ENCODE measurements at regions of chr22 and their contacts with region 1.

Region 1: GRCh38 chr22:46061431-46062231 is 84.7 kb upstream of the WNT7B start:
- DNase-seq: no peak
- H3K4me3 ChIP-seq: peak overlapping the region in 2 of 3 experiments; percentile 15 to 57
- H3K27ac ChIP-seq: peak overlapping the region; percentile 53
- H3K4me1 ChIP-seq: peaks cover 37% of the 10 kb centered on the region
- H3K27me3 ChIP-seq: no peaks in the 10 kb centered on the region
- CTCF ChIP-seq: no peak
- POLR2A ChIP-seq: no peak

Region 2: DNA sequence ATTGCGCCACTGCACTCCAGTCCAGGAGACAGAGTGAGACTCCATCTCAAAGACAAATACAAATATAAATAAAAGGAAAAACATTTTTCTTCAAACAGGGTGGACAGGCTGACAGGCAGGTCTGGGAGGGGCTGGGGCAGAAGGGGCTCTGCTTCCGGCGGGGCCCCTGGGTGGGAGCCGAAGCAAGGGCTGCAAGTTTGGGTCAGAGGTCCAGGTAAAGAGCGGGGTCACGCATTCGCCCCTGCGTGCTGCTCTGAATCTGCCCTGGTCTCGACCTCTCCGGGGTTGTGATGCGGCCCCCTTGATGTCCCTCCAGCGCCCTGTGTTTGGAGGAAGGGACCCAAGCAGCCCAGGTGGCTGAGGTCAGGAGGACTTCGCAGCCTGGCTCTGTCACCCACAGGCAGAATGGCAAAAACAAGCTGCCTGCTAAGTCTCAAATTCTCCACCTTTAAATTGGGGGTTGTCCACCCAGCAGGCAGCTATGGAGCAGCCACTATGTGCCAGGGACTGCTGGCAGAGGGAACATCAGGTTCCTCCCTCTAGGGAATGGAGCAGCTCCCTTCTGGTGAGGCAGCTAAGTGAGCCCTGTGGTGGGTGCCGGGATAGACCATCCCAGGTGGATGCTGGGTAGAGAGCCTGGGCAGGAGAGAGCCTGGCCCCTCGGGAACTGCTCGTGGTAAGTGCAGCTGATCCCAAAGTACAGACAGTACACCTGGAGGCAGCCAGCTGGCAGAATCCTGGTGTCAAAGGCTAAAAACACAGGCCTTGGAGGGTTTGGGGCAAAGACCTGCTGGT is 1041.6 kb before region 1 on chr22:
- CTCF ChIA-PET with region 1: no interaction called
- POLR2A ChIA-PET with region 1: no interaction called
- dilution Hi-C with region 1: no loop called
- intact Hi-C with region 1: no loop called
- DNase-seq: no peak
- H3K4me3 ChIP-seq: no peak overlapping the region
- H3K27ac ChIP-seq: no peak overlapping the region
- H3K4me1 ChIP-seq: no peaks in the 10 kb centered on the region
- H3K27me3 ChIP-seq: no peaks in the 10 kb centered on the region
- CTCF ChIP-seq: no peak
- POLR2A ChIP-seq: no peak

Region 3: GRCh38 chr22:46044621-46045438 is 16.8 kb before region 1 on chr22:
- CTCF ChIA-PET with region 1: no interaction called
- POLR2A ChIA-PET with region 1: no interaction called
- dilution Hi-C with region 1: no loop called
- intact Hi-C with region 1: loop called (anchors 2 kb)
- DNase-seq: peak; percentile 37
- H3K4me3 ChIP-seq: peak overlapping the region; percentile 42 to 47 (median 47)
- H3K27ac ChIP-seq: peak overlapping the region; percentile 53
- H3K4me1 ChIP-seq: peaks cover 22% of the 10 kb centered on the region
- H3K27me3 ChIP-seq: no peaks in the 10 kb centered on the region
- CTCF ChIP-seq: no peak
- POLR2A ChIP-seq: peak; percentile 54

Region 4: DNA sequence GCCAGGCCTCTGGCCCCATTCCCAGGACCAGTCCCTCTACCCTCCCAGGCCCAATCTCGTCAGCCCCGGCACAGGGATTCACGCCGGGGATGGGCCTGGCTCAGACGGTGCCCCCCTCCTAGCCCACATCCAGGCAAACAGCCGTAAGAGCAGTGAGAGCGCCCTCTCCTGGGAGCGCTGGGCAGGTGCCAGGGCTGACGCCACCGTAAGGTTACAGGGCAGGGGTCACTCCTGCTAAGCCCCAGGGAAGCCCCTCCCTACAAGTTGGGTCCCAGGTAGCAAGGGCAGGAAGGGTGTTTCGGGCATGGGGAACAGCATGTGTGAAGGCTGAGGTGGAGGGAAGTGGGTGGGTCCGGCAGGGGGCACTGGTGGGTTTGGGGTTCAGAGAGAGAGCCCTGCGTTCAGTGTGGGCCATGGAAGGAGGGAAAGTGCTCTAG is 69.5 kb after region 1 on chr22:
- CTCF ChIA-PET with region 1: no interaction called
- POLR2A ChIA-PET with region 1: no interaction called
- dilution Hi-C with region 1: no loop called
- intact Hi-C with region 1: no loop called
- DNase-seq: no peak
- H3K4me3 ChIP-seq: no peak overlapping the region
- H3K27ac ChIP-seq: no peak overlapping the region
- H3K4me1 ChIP-seq: no peaks in the 10 kb centered on the region
- H3K27me3 ChIP-seq: no peaks in the 10 kb centered on the region
- CTCF ChIP-seq: peak; percentile 46 to 59
- POLR2A ChIP-seq: no peak

Region 5: DNA sequence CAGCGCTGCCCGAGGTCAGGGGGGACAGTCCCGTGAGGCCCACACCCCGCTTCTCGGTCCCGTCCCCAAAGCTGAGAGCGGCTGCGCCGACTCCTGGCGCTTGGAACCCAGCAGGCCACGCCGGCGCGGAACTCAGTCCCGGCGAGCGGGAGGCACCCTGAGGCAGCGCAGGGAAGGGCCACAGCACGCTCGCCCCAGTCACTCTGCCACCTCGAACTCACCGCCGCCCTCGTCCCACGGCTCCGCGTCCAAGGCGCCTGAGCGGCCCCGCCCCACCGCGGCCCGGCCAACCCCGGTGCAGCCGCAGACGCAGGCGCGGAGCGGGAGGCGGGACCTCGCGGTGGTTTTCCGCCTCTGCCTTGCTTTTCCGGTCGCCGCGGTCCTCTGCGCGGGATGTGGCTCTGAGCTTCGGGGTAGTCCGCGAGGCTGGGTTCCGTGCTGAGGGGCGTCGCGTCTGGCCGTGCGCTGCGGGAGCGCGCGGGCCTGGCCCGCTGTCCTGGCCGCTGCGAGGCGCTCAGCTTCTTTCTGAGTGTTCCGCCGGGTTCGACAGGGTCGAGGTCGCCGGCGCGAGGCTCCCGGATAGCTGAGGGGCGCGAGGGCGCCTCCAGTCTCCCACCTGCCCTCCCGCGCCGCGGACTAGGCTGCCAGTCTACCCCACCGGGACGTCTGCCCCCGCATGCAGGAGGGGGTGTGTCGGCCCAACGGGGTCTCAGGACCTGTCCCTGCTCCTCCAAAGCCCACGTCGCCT is 188.6 kb after region 1 on chr22 and contains the start of gene CDPF1:
- CTCF ChIA-PET with region 1: no interaction called
- POLR2A ChIA-PET with region 1: no interaction called
- dilution Hi-C with region 1: no loop called
- intact Hi-C with region 1: no loop called
- DNase-seq: peak; percentile 87
- H3K4me3 ChIP-seq: peak within 1 kb of the TSS; percentile 66 to 88 (median 67)
- H3K27ac ChIP-seq: peak within 1 kb of the TSS; percentile 32
- H3K4me1 ChIP-seq: peaks cover 6% of the 10 kb centered on the region
- H3K27me3 ChIP-seq: no peaks in the 10 kb centered on the region
- CTCF ChIP-seq: no peak
- POLR2A ChIP-seq: peak; percentile 89
- total RNA-seq, gene CDPF1: 8.5 and 9.7 TPM in 2 replicates

Measured in endothelial cell of umbilical vein (primary cell).